Endothelial cell of umbilical vein (primary cell): ENCODE measurements at regions of chr20 and their contacts with region 1.

Region 1: DNA sequence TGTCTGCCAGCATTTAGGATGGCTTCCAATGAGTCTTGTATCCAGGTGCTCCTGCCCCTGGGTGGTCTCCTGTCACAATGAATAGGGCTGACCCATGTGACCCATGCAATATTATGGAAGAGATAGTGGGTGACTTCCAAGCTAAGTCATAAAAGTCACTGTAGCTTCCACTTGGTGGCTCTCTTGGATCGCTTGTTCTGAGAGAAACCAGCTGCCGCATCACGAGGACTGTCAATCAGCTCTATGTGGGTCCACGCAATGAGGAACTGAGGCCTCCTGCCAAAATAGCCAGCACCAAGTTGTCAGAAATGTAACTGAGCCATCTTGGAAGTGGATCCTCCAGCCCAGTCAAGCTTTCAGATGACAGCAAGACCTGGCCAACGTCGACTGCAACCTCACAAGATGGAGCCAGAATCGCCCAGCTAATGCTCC is 14.9 kb upstream of the MATN4 start:
- DNase-seq: peak; percentile 41
- H3K4me3 ChIP-seq: no peak overlapping the region
- H3K27ac ChIP-seq: no peak overlapping the region
- H3K4me1 ChIP-seq: no peaks in the 10 kb centered on the region
- H3K27me3 ChIP-seq: peaks cover 2% of the 10 kb centered on the region in 2 experiments
- CTCF ChIP-seq: peak in 1 of 2 donors; percentile 15
- POLR2A ChIP-seq: no peak

Region 2: GRCh38 chr20:45279992-45280391 is 43.0 kb before region 1 on chr20:
- CTCF ChIA-PET with region 1: no interaction called
- POLR2A ChIA-PET with region 1: no interaction called
- dilution Hi-C with region 1: no loop called
- intact Hi-C with region 1: no loop called
- DNase-seq: no peak
- H3K4me3 ChIP-seq: no peak overlapping the region
- H3K27ac ChIP-seq: no peak overlapping the region
- H3K4me1 ChIP-seq: no peaks in the 10 kb centered on the region
- H3K27me3 ChIP-seq: peaks cover 2 to 3% of the 10 kb centered on the region in 2 experiments
- CTCF ChIP-seq: no peak
- POLR2A ChIP-seq: no peak

Region 3: GRCh38 chr20:45337367-45338120 is 14.6 kb after region 1 on chr20:
- CTCF ChIA-PET with region 1: interaction called, 12 read pairs
- POLR2A ChIA-PET with region 1: no interaction called
- dilution Hi-C with region 1: no loop called
- intact Hi-C with region 1: no loop called
- DNase-seq: no peak
- H3K4me3 ChIP-seq: no peak overlapping the region
- H3K27ac ChIP-seq: peak overlapping the region; percentile 12
- H3K4me1 ChIP-seq: peaks cover 27% of the 10 kb centered on the region
- H3K27me3 ChIP-seq: no peaks in the 10 kb centered on the region
- CTCF ChIP-seq: no peak
- POLR2A ChIP-seq: no peak

Region 4: GRCh38 chr20:45347936-45348778 is 25.2 kb after region 1 on chr20 and contains the start of gene SDC4:
- CTCF ChIA-PET with region 1: interaction called, 12 read pairs
- POLR2A ChIA-PET with region 1: interaction called, 6 read pairs
- dilution Hi-C with region 1: no loop called
- intact Hi-C with region 1: no loop called
- DNase-seq: peak; percentile 44
- H3K4me3 ChIP-seq: peak within 1 kb of the TSS; percentile 50 to 85 (median 69)
- H3K27ac ChIP-seq: peak within 1 kb of the TSS; percentile 62
- H3K4me1 ChIP-seq: peaks cover 49% of the 10 kb centered on the region
- H3K27me3 ChIP-seq: no peaks in the 10 kb centered on the region
- CTCF ChIP-seq: no peak
- POLR2A ChIP-seq: peak; percentile 99
- total RNA-seq, gene SDC4: 28.7 and 32.0 TPM in 2 replicates

Region 5: DNA sequence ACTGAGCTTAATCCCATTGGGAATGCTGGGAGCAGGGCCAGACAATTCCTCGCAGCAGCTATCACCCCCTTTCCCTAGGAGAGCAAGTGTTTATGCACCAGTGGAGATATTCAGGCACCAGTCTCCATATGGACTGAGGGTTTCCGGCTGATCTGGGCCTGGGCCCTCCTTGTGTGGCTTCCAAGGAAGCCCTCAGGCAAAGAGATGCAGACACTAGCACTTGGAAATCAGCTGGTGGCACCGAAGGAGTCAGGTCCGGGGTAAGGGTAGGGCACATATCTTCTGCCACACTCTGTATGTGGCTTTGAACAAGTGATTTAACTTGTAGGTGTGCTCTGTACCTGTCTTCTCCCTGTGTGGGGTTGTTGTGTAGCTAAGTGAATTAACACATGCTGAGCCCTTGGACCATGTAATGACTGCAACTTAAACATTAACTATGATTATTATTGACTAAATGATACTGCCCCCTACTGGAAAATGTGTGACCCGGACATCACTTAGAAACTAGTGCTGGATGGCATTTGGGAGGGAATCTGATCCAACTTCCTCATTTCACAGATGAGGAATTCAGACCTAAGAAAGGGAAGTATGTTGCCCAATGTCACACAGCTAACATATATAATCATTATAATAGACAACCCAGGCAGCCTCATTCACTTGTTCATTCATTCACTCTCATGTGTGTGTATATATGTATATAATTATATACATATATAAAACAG is 127.3 kb after region 1 on chr20:
- CTCF ChIA-PET with region 1: interaction called, 71 read pairs
- POLR2A ChIA-PET with region 1: no interaction called
- dilution Hi-C with region 1: no loop called
- intact Hi-C with region 1: loop called (anchors 1 kb)
- DNase-seq: peak; percentile 54
- H3K4me3 ChIP-seq: no peak overlapping the region
- H3K27ac ChIP-seq: no peak overlapping the region
- H3K4me1 ChIP-seq: no peaks in the 10 kb centered on the region
- H3K27me3 ChIP-seq: peaks cover 0 to 3% of the 10 kb centered on the region in 2 experiments
- CTCF ChIP-seq: peak; percentile 48 to 56
- POLR2A ChIP-seq: no peak

Region 6: DNA sequence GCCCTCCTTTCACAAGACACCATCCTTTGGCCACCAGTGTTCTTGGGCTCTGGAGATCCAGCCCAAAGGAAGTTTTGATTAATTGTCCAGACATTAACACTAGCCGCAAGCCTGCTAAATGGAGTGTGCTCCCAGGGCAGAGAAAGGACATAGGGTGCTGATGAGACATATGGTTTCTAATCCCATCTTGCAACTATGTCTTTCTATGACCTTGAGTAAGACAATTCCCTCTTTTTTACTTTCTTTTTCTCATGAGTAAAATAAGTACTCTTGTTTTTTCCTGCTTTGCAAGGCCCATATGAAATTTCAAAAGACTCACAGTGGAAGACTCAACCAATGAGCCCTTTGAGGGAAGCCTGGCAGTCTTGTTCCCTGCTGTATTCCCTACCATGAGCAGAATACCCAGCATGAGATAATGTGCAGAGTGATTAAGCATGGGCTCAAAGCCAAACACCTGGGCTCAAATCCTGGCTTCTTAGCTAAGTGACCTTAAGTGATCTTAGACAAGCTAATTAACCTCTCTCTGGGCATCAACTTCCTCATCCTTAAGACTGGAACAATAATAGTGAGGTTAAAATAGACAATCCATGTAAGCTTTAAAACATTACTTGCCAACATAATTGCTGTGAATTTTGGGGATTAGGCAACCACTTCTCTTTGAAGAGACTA is 382.1 kb after region 1 on chr20 and contains the start of gene WFDC10B:
- CTCF ChIA-PET with region 1: no interaction called
- POLR2A ChIA-PET with region 1: no interaction called
- dilution Hi-C with region 1: no loop called
- intact Hi-C with region 1: no loop called
- DNase-seq: no peak
- H3K4me3 ChIP-seq: no peak within 1 kb of the TSS
- H3K27ac ChIP-seq: no peak within 1 kb of the TSS
- H3K4me1 ChIP-seq: no peaks in the 10 kb centered on the region
- H3K27me3 ChIP-seq: no peaks in the 10 kb centered on the region
- CTCF ChIP-seq: no peak
- POLR2A ChIP-seq: no peak
- total RNA-seq, gene WFDC10B: not detected in 2 replicates